Pancreas (tissue), 10 donors: ENCODE measurements at regions of chr1 and their contacts with region 1.

Region 1: GRCh38 chr1:2941907-2942306 is 79.4 kb upstream of the ACTRT2 start:
- DNase-seq: peak in 3 of 6 donors; percentile 5 to 35 (median 28)
- ATAC-seq: no peak
- H3K4me3 ChIP-seq: no peak overlapping the region
- H3K27ac ChIP-seq: no peak overlapping the region
- H3K4me1 ChIP-seq: no peaks in the 10 kb centered on the region
- H3K27me3 ChIP-seq: no peaks in the 10 kb centered on the region
- CTCF ChIP-seq: no peak

Region 2: GRCh38 chr1:2855206-2856065 is 86.5 kb before region 1 on chr1:
- intact Hi-C with region 1: no loop called
- DNase-seq: no peak
- ATAC-seq: no peak
- H3K4me3 ChIP-seq: no peak overlapping the region
- H3K27ac ChIP-seq: no peak overlapping the region
- H3K4me1 ChIP-seq: no peaks in the 10 kb centered on the region
- H3K27me3 ChIP-seq: no peaks in the 10 kb centered on the region
- CTCF ChIP-seq: no peak

Region 3: DNA sequence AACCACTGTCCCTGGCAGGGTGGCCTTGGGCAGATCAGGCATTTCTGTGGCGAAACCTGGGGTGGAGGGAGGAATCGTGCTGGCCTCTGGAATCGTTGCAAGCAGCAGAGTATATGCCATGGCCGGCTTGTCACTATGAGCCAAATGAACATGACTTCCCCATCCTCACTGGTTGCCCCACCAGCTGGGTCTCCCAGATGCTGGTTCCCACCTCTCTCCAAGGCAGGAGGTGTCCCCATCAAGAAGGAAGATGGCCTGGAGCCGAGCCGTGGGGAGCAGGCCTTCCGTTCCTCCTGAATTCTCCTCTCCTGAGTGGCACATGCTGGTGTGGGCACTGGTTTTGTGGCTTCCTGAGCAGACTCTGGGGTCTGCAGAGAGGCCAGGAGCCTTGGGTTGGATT is 19.2 kb after region 1 on chr1:
- intact Hi-C with region 1: loop called in 1 of 3 experiments (anchors 2 kb)
- DNase-seq: peak in 2 of 6 donors; percentile 21 to 32
- ATAC-seq: no peak
- H3K4me3 ChIP-seq: no peak overlapping the region
- H3K27ac ChIP-seq: no peak overlapping the region
- H3K4me1 ChIP-seq: no peaks in the 10 kb centered on the region
- H3K27me3 ChIP-seq: no peaks in the 10 kb centered on the region
- CTCF ChIP-seq: no peak